Sigmoid colon (tissue), 7 donors: ENCODE measurements at regions of chr7 and their contacts with region 1.

Region 1: GRCh38 chr7:16078076-16078952 is 343.0 kb downstream of the CRPPA start:
- DNase-seq: no peak
- H3K4me3 ChIP-seq: no peak overlapping the region
- H3K27ac ChIP-seq: no peak overlapping the region
- H3K4me1 ChIP-seq: no peaks in the 10 kb centered on the region
- H3K27me3 ChIP-seq: no peaks in the 10 kb centered on the region
- CTCF ChIP-seq: peak; percentile 21 to 69 (median 66)
- EP300 ChIP-seq: no peak
- POLR2A ChIP-seq: no peak

Region 2: DNA sequence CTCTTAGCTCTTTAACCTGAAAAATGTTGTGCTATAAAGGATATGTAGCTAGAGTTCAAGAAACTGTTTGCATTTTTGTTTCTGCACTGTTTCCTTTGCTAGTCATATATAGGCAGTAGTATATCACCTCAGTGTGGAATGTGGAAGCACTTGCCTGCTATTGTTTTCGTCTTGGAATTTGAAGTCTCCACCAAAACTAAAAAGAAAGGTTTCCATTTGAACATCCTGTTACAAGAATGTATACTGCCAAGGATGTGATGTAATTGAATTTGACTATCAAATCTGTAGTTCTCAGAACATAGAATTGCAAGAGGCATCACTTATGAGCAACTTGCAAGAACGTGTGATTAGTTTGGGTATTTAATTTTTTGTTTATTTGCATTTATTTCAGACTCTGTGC is 340.7 kb before region 1 on chr7:
- intact Hi-C with region 1: no loop called
- DNase-seq: no peak
- H3K4me3 ChIP-seq: no peak overlapping the region
- H3K27ac ChIP-seq: no peak overlapping the region
- H3K4me1 ChIP-seq: peaks cover 0 to 4% (median 0%) of the 10 kb centered on the region in 4 donors
- H3K27me3 ChIP-seq: no peaks in the 10 kb centered on the region
- CTCF ChIP-seq: no peak
- EP300 ChIP-seq: no peak
- POLR2A ChIP-seq: no peak

Region 3: DNA sequence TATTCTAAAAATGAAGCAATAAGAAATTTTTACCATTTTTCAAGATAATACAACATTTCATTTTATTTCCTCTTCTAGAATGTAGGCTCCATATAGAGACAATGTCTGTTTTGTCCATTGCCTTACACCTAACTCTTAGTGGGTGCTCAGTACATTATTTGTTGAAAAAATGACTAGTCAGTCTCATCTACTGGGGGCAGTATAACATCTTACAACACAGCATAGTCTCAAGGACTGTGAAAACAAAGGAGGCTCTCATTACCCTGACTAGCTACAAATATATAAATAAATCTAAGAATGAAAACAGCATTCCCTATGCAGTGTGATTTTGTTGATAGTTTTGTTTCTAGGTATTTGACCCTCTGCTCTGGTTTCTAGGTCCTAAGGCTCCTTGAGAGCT is 331.5 kb after region 1 on chr7:
- intact Hi-C with region 1: loop called (anchors 5 kb)
- DNase-seq: no peak
- H3K4me3 ChIP-seq: no peak overlapping the region
- H3K27ac ChIP-seq: no peak overlapping the region
- H3K4me1 ChIP-seq: no peaks in the 10 kb centered on the region
- H3K27me3 ChIP-seq: no peaks in the 10 kb centered on the region
- CTCF ChIP-seq: no peak
- EP300 ChIP-seq: no peak
- POLR2A ChIP-seq: no peak

Region 4: GRCh38 chr7:16564909-16565426 is 486.7 kb after region 1 on chr7:
- intact Hi-C with region 1: loop called (anchors 2 kb)
- DNase-seq: no peak
- H3K4me3 ChIP-seq: no peak overlapping the region
- H3K27ac ChIP-seq: no peak overlapping the region
- H3K4me1 ChIP-seq: peaks cover 0 to 14% (median 0%) of the 10 kb centered on the region in 4 donors
- H3K27me3 ChIP-seq: no peaks in the 10 kb centered on the region
- CTCF ChIP-seq: peak in 3 of 4 experiments; percentile 63 to 80 (median 64)
- EP300 ChIP-seq: no peak
- POLR2A ChIP-seq: no peak